Posterior cingulate gyrus (tissue), 11 donors: ENCODE measurements at regions of chr6 and their contacts with region 1.

Region 1: DNA sequence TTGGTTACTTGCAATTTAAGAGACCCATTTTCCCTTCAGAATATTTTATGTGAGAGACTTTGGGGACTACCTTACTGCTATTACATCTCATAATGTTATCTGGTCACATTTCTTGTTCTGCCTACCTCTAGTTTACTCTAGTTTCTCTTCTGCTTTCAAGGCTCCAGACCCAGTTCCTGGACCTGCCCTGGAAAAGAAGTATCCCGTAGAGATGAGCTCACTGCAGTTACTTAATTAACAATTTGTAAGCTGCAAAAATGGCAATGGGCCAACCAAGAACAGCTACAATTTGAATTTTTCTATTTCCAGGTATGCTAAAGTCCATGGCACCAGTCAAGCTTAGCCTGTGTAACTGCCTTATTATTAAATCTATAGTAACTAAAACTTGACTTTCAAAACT is 25.0 kb downstream of the TAB2 start:
- DNase-seq: no peak

Region 2: DNA sequence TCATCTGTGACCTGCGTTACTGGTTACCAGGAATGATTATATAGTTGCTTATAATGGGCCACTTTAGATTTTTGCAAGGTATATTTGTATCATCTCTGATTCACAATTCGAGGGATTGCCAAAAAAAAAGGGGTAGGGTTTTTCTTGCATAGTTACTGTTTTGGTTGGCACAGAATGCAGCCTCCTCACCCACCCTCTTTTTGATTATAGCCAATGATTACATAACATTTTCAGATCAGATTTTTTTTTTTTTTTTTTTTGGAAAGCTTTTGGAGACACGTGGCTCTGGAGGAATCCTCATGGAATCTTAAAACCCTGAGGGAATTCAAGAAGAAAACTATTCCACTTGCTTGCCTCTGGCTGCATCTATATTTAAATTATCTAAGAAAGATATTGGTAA is 542.0 kb before region 1 on chr6:
- intact Hi-C with region 1: no loop called
- DNase-seq: no peak

Region 3: DNA sequence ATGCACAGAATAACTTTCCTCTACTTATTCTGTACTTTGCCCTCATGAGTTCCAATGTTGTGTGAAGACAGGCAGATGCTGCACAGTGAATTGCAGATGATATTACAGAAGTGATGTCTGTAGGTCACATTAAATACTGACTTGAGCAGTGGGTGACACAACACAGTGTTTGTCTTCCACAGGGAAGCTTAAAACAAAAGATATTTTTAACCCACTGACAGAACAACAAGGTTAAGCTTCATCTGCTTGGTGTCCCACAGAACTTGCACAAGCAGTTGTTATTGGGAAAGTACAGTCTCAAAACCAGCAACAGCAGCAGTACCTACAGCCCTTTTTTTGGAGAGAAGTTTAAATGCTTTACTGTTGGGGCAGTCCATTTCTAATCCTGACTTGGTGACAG is 68.0 kb after region 1 on chr6:
- intact Hi-C with region 1: loop called (anchors 10 kb)
- DNase-seq: no peak